CD4-positive, alpha-beta T cell (primary cell): ENCODE measurements at regions of chr12 and their contacts with region 1.

Region 1: DNA sequence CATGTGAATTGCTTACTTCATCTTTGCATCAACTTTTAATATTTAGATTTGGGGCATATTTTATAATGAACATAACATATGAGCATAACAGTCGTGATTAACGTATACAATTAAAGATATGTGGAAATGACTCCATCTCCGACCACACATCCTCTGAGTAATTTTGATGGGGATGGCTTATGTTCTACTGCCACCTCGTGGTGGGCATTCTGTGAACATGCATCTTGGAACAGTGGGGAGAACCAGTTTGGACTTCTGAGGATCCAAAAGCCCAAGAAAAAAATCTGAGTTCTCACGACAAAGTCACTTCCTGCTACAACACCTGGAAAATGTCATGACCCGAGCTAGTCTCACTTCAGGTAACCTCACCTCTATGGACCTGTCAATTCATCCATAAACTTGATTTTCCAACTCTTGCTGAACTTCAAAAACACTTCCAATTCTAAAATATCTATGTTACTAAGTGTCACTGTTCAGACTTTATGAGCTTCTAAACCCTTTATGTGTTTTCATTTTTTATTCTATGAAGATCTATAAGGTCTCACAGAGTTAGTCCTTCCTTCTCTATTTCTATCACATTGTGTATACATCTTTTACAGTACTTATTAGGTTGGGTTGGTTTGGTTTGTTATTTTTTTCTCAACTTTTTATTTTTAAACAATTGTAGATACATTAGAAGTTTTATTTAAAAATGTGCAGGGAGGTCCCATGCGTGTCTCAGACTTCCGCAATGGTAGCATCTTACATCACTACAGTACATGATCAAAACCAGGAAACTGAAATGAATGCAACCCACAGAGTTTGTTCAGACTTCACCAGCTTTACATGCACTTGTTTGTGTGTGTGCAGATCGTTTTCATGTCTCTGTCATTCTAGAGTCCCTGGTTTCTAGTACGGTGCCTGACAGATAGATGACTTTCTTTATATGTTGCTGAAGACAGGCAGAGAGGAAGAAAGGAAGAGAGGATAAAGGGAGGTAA is 38.2 kb upstream of the STAB2 start:
- DNase-seq: peak; percentile 44 to 79 (median 54)
- ATAC-seq: peak; percentile 60
- H3K4me3 ChIP-seq: no peak overlapping the region
- H3K4me3 Mint-ChIP-seq: no peak overlapping the region
- H3K27ac ChIP-seq: no peak overlapping the region
- H3K27ac Mint-ChIP-seq: no peak overlapping the region
- H3K4me1 ChIP-seq: no peaks in the 10 kb centered on the region
- H3K4me1 Mint-ChIP-seq: no peaks in the 10 kb centered on the region
- H3K27me3 ChIP-seq: peaks cover 0 to 5% of the 10 kb centered on the region in 2 experiments
- H3K27me3 Mint-ChIP-seq: peaks cover 28% of the 10 kb centered on the region
- CTCF ChIP-seq: peak; percentile 79

Region 2: GRCh38 chr12:101939856-101940265 is 1609.1 kb before region 1 on chr12:
- CTCF ChIA-PET with region 1: interaction called, 3 read pairs
- POLR2A ChIA-PET with region 1: no interaction called
- intact Hi-C with region 1: loop called (anchors 2 to 5 kb)
- DNase-seq: peak; percentile 20 to 75 (median 38)
- ATAC-seq: peak; percentile 71
- H3K4me3 ChIP-seq: no peak overlapping the region
- H3K4me3 Mint-ChIP-seq: no peak overlapping the region
- H3K27ac ChIP-seq: no peak overlapping the region
- H3K27ac Mint-ChIP-seq: no peak overlapping the region
- H3K4me1 ChIP-seq: no peaks in the 10 kb centered on the region
- H3K4me1 Mint-ChIP-seq: no peaks in the 10 kb centered on the region
- H3K27me3 ChIP-seq: no peaks in the 10 kb centered on the region
- H3K27me3 Mint-ChIP-seq: peaks cover 19% of the 10 kb centered on the region
- CTCF ChIP-seq: peak; percentile 74

Region 3: GRCh38 chr12:102484428-102484958 is 1064.4 kb before region 1 on chr12:
- CTCF ChIA-PET with region 1: no interaction called
- POLR2A ChIA-PET with region 1: no interaction called
- intact Hi-C with region 1: loop called (anchors 5 to 10 kb)
- DNase-seq: peak; percentile 9 to 71 (median 29)
- ATAC-seq: peak; percentile 44
- H3K4me3 ChIP-seq: peak overlapping the region; percentile 21
- H3K4me3 Mint-ChIP-seq: peak overlapping the region; percentile 68
- H3K27ac ChIP-seq: no peak overlapping the region
- H3K27ac Mint-ChIP-seq: no peak overlapping the region
- H3K4me1 ChIP-seq: peaks cover 3% of the 10 kb centered on the region
- H3K4me1 Mint-ChIP-seq: peaks cover 8% of the 10 kb centered on the region
- H3K27me3 ChIP-seq: no peaks in the 10 kb centered on the region
- H3K27me3 Mint-ChIP-seq: peaks cover 7% of the 10 kb centered on the region
- CTCF ChIP-seq: peak; percentile 94

Region 4: GRCh38 chr12:102883204-102883799 is 665.6 kb before region 1 on chr12:
- CTCF ChIA-PET with region 1: interaction called, 3 read pairs
- POLR2A ChIA-PET with region 1: no interaction called
- intact Hi-C with region 1: loop called (anchors 1 kb)
- DNase-seq: peak in 12 of 14 experiments; percentile 7 to 43 (median 20)
- ATAC-seq: no peak
- H3K4me3 ChIP-seq: no peak overlapping the region
- H3K4me3 Mint-ChIP-seq: no peak overlapping the region
- H3K27ac ChIP-seq: no peak overlapping the region
- H3K27ac Mint-ChIP-seq: no peak overlapping the region
- H3K4me1 ChIP-seq: peaks cover 2% of the 10 kb centered on the region
- H3K4me1 Mint-ChIP-seq: no peaks in the 10 kb centered on the region
- H3K27me3 ChIP-seq: no peaks in the 10 kb centered on the region
- H3K27me3 Mint-ChIP-seq: peaks cover 38% of the 10 kb centered on the region
- CTCF ChIP-seq: peak; percentile 62

Region 5: GRCh38 chr12:102948941-102949352 is 600.0 kb before region 1 on chr12:
- CTCF ChIA-PET with region 1: interaction called, 14 read pairs
- POLR2A ChIA-PET with region 1: no interaction called
- intact Hi-C with region 1: loop called (anchors 1 kb)
- DNase-seq: peak in 13 of 14 experiments; percentile 15 to 64 (median 36)
- ATAC-seq: no peak
- H3K4me3 ChIP-seq: no peak overlapping the region
- H3K4me3 Mint-ChIP-seq: no peak overlapping the region
- H3K27ac ChIP-seq: no peak overlapping the region
- H3K27ac Mint-ChIP-seq: no peak overlapping the region
- H3K4me1 ChIP-seq: no peaks in the 10 kb centered on the region
- H3K4me1 Mint-ChIP-seq: no peaks in the 10 kb centered on the region
- H3K27me3 ChIP-seq: peaks cover 21 to 52% of the 10 kb centered on the region in 2 experiments
- H3K27me3 Mint-ChIP-seq: peaks cover 87% of the 10 kb centered on the region
- CTCF ChIP-seq: peak; percentile 84

Region 6: GRCh38 chr12:103475073-103475472 is 73.8 kb before region 1 on chr12:
- CTCF ChIA-PET with region 1: no interaction called
- POLR2A ChIA-PET with region 1: no interaction called
- intact Hi-C with region 1: no loop called
- DNase-seq: no peak
- ATAC-seq: no peak
- H3K4me3 ChIP-seq: no peak overlapping the region
- H3K4me3 Mint-ChIP-seq: no peak overlapping the region
- H3K27ac ChIP-seq: no peak overlapping the region
- H3K27ac Mint-ChIP-seq: no peak overlapping the region
- H3K4me1 ChIP-seq: no peaks in the 10 kb centered on the region
- H3K4me1 Mint-ChIP-seq: no peaks in the 10 kb centered on the region
- H3K27me3 ChIP-seq: no peaks in the 10 kb centered on the region
- H3K27me3 Mint-ChIP-seq: no peaks in the 10 kb centered on the region
- CTCF ChIP-seq: no peak

Region 7: GRCh38 chr12:103495479-103496456 is 53.1 kb before region 1 on chr12 and contains the start of gene C12orf42:
- CTCF ChIA-PET with region 1: interaction called, 4 read pairs
- POLR2A ChIA-PET with region 1: no interaction called
- intact Hi-C with region 1: loop called in 1 of 2 experiments (anchors 2 kb)
- DNase-seq: peak in 13 of 14 experiments; percentile 26 to 78 (median 52)
- ATAC-seq: peak; percentile 72
- H3K4me3 ChIP-seq: peak within 1 kb of the TSS; percentile 62
- H3K4me3 Mint-ChIP-seq: peak within 1 kb of the TSS; percentile 87
- H3K27ac ChIP-seq: peak within 1 kb of the TSS in 1 of 2 donors; percentile 43
- H3K27ac Mint-ChIP-seq: peak within 1 kb of the TSS; percentile 76
- H3K4me1 ChIP-seq: peaks cover 15% of the 10 kb centered on the region
- H3K4me1 Mint-ChIP-seq: peaks cover 18% of the 10 kb centered on the region
- H3K27me3 ChIP-seq: peaks cover 4 to 9% of the 10 kb centered on the region in 2 experiments
- H3K27me3 Mint-ChIP-seq: peaks cover 29% of the 10 kb centered on the region
- CTCF ChIP-seq: peak; percentile 38
- total RNA-seq, gene C12orf42: 3.9 to 4.8 TPM

Region 8: DNA sequence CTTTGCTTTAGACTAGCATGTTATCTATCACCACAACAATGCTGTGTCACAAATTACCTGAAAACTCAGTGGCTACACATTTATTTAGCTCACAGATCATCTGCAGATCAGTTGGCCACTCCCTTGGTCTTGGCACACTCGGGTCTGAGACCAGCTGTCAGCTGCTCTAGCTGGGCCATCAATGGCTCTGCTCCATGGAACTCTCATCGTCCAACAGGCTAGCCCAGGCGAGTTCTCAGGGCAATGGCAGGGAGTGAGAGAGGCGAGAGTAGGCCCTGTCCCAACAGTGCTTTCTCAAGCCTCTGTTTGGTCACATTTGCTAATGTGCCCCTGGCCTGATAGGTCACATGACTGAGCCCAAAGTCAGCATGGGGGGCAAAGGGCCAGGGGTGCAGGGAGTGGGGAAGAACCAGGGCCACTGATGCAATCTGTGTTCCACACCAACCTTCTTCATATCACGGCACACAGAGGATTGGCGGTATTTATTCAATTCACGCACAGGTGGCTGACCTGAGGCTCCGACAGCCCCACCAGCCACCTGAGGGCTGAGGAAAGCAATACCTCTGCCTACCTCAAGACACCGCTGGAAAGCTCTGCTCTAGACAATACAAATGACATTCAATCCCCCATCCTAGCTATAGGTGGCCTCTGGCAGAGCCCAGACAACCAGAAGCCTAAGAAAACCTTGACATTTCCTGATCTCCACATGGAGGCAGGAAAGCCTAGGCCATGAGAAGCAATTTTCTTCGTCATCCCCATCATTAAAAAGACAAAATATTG is 209.6 kb after region 1 on chr12:
- CTCF ChIA-PET with region 1: no interaction called
- POLR2A ChIA-PET with region 1: no interaction called
- intact Hi-C with region 1: no loop called
- DNase-seq: no peak
- ATAC-seq: no peak
- H3K4me3 ChIP-seq: no peak overlapping the region
- H3K4me3 Mint-ChIP-seq: no peak overlapping the region
- H3K27ac ChIP-seq: no peak overlapping the region
- H3K27ac Mint-ChIP-seq: no peak overlapping the region
- H3K4me1 ChIP-seq: no peaks in the 10 kb centered on the region
- H3K4me1 Mint-ChIP-seq: no peaks in the 10 kb centered on the region
- H3K27me3 ChIP-seq: no peaks in the 10 kb centered on the region
- H3K27me3 Mint-ChIP-seq: no peaks in the 10 kb centered on the region
- CTCF ChIP-seq: no peak